Head of caudate nucleus (tissue), 42 donors: ENCODE measurements at regions of chr14 and their contacts with region 1.

Region 1: DNA sequence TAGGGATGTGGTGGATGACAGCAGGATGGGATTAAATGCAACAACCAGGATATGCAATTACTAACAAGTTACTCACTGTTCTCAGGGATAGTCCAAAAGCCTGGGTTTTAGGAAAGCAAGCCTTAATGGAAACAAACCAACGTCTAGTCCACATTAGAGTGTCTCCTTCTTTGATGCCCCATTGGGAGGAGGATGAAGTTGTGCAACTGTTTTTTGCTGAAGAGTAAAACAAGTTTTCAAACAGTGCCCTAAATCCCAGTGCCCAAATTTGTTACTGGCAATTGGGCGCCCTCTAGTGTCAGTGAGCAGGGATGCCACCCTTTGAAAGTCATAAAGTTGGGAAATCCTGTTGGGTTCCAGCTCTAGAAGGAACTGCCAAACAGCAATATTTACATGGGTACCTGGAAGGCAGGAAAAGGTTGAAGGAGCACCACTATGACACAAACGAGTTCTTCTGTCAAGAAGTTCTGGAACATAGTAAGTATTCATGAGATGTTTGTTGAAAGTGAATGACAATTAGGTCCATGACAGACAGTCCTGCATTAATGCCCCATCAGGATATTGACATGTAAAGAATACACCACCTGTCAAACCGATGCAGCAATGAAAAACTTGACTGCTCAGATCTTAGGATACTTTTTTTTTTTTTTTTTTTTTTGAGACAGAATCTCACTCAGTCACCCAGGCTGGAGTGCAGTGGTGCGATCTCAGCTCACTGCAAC is 11.1 kb upstream of the DPF3 start:
- DNase-seq: peak in 41 of 42 donors; percentile 32 to 89 (median 71)

Region 2: DNA sequence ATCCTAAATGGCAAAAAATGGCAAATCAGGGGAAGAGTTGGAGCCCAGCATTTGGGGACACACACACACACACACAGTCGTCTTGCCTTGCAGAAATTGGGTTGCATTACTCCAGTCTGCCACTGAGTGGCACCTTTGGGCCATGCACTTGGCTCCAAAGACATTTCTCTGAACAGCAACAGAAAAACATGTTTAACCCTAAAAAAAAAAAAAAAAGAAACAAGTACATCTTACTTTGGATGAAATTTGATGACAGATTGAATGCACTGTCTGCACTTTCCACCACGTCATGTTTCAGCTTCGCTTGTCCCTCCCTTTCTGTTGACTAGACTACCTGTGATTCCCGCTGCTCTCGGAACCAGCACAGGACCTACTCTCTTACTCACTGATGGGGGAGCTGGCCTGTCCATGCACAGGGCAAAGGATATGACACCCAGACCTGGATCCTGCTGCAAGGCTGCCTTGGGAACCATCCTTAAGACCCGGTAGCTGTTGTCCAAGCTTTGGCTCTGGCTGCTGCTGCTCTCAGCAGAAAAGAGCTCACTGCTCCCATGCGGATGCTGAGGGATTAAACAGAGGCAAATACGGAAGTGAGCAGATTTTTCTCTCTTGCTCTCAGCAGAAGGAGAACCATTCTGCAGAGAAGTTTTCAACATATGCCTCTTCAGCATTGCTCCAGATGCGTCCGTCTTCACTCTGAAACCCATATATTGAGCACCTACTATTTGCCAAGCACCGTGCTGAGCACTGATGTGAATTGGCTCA is 387.9 kb before region 1 on chr14:
- intact Hi-C with region 1: loop called (anchors 5 kb)
- DNase-seq: peak; percentile 25 to 91 (median 78)

Region 3: DNA sequence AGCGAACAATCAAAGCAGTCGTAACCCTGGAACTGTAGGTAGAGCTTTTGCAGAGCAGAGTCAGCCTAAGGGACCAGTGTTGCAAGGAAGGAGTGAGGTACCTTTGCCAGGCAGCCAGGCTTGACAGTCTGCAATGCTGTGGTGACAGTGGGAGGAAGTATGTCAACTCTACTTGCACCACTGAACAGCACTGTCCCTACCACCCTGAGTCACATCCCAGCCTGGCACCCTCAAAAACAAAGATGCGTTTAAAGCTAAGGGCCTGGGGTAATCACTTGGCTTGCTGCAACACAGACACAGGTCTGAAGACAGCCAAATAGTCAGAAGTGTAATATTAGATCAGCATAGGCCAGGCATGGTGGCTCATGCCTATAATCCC is 153.0 kb before region 1 on chr14:
- intact Hi-C with region 1: no loop called
- DNase-seq: no peak

Region 4: DNA sequence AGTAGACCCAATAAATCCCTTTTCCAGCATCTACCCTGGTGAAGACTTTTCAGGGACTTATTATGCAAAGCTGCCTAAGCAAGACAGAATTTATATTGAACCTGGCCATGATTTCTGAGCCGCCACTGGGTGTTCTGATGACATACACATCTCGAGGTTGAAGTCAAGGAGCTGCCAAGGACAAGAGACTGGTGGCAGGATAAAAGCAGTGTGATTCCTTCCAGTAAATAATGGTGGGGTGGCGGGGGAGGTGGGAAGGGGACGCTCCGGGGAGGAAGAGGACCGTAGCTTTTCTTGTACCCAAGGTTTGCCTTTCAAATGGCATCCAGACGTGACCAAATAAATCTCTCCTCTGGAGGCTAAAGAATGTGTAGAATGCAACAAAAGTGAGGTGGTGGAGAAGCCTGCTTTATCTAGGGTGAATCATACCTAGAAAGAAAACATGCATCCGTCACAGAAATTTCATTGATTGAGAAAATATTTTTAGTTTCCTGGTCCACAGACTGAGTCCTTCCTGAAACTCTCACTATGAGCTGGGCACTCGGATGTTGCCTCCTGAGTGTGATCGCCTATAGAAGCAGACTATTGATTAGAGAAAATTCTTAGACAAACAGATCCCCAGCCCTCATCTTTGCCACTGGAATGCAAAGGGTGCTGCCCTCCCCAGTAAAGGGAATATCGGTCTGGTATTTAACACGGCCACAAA is 123.4 kb before region 1 on chr14:
- intact Hi-C with region 1: no loop called
- DNase-seq: peak in 1 of 42 donors; percentile 32

Region 5: GRCh38 chr14:72926292-72927028 is 21.5 kb after region 1 on chr14 and contains the start of gene DCAF4:
- intact Hi-C with region 1: loop called (anchors 2 kb)
- DNase-seq: peak; percentile 81 to 99 (median 95)